ENCODE measurements at regions of chr2 and their contacts with region 1.

Region 1: GRCh38 chr2:100416935-100417710 is at the start of gene CHST10:
- DNase-seq: peak; percentile 65
- ATAC-seq: peak; percentile 97
- H3K4me3 Mint-ChIP-seq: peak within 1 kb of the TSS; percentile 81
- H3K27ac Mint-ChIP-seq: peak within 1 kb of the TSS; percentile 85
- H3K4me1 Mint-ChIP-seq: peaks cover 25% of the 10 kb centered on the region
- H3K27me3 Mint-ChIP-seq: no peaks in the 10 kb centered on the region
- CTCF ChIP-seq: no peak
- total RNA-seq, gene CHST10: 9.5 to 10.5 TPM

Region 2: GRCh38 chr2:100350707-100351106 is 66.4 kb before region 1 on chr2:
- CTCF ChIA-PET with region 1: no interaction called
- POLR2A ChIA-PET with region 1: no interaction called
- intact Hi-C with region 1: loop called (anchors 10 kb)
- DNase-seq: no peak
- ATAC-seq: no peak
- H3K4me3 Mint-ChIP-seq: no peak overlapping the region
- H3K27ac Mint-ChIP-seq: no peak overlapping the region
- H3K4me1 Mint-ChIP-seq: no peaks in the 10 kb centered on the region
- H3K27me3 Mint-ChIP-seq: peaks cover 15% of the 10 kb centered on the region
- CTCF ChIP-seq: no peak

Region 3: DNA sequence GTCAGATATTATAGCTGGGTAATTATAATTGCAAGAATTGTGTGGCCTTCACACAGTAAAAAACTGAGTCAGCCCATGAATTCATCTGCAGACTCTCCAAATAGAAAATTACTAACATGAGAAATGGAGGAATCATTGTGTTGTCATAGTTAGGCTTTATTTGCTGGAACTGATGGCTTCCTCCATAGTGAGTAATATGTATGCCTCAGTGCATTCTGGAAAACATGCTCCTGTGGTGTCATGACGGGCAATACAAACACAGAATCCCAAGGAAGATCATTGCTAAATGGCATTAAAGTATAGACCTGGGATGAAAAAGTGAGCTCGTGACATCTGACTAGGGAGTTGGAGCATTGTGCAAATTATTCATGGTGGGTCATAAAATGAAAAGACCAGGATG is 29.6 kb after region 1 on chr2:
- CTCF ChIA-PET with region 1: no interaction called
- POLR2A ChIA-PET with region 1: no interaction called
- intact Hi-C with region 1: no loop called
- DNase-seq: no peak
- ATAC-seq: no peak
- H3K4me3 Mint-ChIP-seq: no peak overlapping the region
- H3K27ac Mint-ChIP-seq: no peak overlapping the region
- H3K4me1 Mint-ChIP-seq: no peaks in the 10 kb centered on the region
- H3K27me3 Mint-ChIP-seq: no peaks in the 10 kb centered on the region
- CTCF ChIP-seq: no peak

Region 4: DNA sequence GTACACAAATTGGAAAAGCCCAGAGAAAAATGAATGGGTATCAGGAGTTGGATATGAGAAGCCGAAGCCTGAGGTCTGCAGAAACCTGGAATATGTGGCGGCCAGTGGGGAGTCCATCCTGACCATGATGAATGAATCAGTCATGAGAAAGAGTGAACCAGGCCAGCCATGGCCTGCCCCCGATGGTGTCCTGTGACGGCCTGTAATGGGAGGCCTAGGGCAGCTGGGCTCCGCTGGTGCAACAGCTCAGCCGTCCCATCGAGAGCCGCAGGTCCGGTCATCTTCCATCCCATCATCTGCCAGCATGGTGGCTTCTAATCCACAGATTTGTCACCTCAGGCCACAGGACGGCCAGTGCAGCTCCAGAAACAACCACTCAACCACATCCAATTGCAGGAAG is 262.1 kb after region 1 on chr2:
- CTCF ChIA-PET with region 1: no interaction called
- POLR2A ChIA-PET with region 1: no interaction called
- intact Hi-C with region 1: no loop called
- DNase-seq: no peak
- ATAC-seq: no peak
- H3K4me3 Mint-ChIP-seq: no peak overlapping the region
- H3K27ac Mint-ChIP-seq: no peak overlapping the region
- H3K4me1 Mint-ChIP-seq: peaks cover 14% of the 10 kb centered on the region
- H3K27me3 Mint-ChIP-seq: no peaks in the 10 kb centered on the region
- CTCF ChIP-seq: no peak

Measured in activated CD8-positive, alpha-beta T cell treated with anti-CD3 and anti-CD28 coated beads for 36 hours (primary cell).